ENCODE measurements at regions of chr7 and their contacts with region 1.

Region 1: DNA sequence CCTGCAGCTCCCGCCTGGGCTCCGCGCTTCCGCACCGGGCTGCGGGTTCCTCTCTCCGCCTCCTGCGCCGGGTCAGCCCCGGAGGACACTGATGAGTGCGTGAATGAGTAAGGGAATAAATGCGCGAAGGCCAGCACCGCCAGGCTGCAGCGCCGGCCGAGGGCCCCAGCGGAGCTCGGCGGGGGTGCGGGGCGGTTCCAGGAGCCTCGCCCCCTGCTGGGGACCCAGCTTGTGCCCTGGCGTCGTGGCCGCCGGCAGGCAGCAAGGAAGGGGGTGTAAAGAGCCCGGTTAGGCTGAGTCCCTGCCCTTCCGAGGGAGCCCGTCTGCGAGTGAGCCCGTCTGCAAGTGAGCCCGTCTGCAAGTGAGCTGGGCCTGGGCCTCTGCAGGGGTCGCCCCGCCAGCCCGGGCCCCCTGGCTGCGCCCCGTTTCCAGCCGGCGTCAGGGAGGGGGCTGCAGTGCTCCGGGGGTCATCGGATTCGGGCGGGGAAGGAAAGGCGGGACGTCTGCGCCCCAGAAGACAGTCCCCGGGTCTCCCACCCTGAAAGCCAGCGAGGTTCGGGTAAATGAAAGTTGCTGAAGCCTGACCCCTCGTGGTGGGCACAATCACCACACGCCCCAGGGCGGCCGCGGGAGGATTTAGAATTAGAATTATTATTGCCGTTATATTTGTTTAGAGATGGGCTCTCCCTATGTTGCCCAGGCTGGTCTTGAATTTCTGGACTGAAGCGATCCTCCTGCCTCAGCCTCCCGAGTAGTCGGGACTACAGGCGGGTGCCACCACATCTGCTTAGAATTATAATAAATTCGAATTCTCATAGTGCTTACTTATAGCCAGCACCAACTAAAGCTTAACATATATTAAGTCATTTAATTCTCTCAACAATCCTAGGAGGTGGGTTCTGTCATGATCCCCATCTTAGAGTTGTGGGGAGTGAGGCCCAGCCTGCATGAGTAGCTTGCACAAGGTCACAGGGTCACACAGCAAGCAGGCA is 8.6 kb upstream of the CRYGN start:
- DNase-seq: peak; percentile 69
- H3K4me3 Mint-ChIP-seq: peak overlapping the region; percentile 58
- H3K27ac Mint-ChIP-seq: no peak overlapping the region
- H3K4me1 Mint-ChIP-seq: peaks cover 2% of the 10 kb centered on the region
- H3K27me3 Mint-ChIP-seq: peaks cover 5% of the 10 kb centered on the region

Region 2: GRCh38 chr7:151304856-151305255 is 143.7 kb before region 1 on chr7:
- intact Hi-C with region 1: no loop called
- DNase-seq: no peak
- H3K4me3 Mint-ChIP-seq: peak overlapping the region; percentile 47
- H3K27ac Mint-ChIP-seq: no peak overlapping the region
- H3K4me1 Mint-ChIP-seq: peaks cover 15% of the 10 kb centered on the region
- H3K27me3 Mint-ChIP-seq: peaks cover 31% of the 10 kb centered on the region

Region 3: GRCh38 chr7:151315038-151315655 is 133.4 kb before region 1 on chr7:
- intact Hi-C with region 1: loop called (anchors 1 kb)
- DNase-seq: peak; percentile 69
- H3K4me3 Mint-ChIP-seq: no peak overlapping the region
- H3K27ac Mint-ChIP-seq: no peak overlapping the region
- H3K4me1 Mint-ChIP-seq: peaks cover 7% of the 10 kb centered on the region
- H3K27me3 Mint-ChIP-seq: no peaks in the 10 kb centered on the region

Region 4: DNA sequence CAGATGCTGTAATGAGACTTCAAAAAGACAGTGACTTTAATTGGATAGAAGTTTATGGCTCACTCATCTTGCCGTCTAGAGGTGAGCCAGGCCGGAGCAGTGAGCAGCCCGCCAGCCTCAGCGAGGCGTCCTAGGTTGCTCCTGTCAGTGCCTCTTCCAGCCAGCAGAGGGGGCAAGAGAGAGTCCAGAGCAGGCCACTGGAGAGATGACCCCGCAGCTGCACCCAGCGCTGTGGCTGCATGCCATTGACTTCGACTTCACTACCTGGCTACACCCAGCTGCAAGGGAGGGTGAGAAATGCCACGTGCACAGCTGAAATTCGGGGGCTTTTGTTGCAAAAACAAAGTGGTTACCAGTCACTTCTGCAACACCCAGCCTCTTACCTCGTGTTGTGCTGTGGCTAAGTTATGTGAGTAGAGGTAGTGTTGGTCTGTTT is 80.4 kb before region 1 on chr7:
- intact Hi-C with region 1: loop called (anchors 1 kb)
- DNase-seq: peak; percentile 64
- H3K4me3 Mint-ChIP-seq: no peak overlapping the region
- H3K27ac Mint-ChIP-seq: no peak overlapping the region
- H3K4me1 Mint-ChIP-seq: peaks cover 4% of the 10 kb centered on the region
- H3K27me3 Mint-ChIP-seq: no peaks in the 10 kb centered on the region